H1 (cell line): ENCODE measurements at regions of chr7 and their contacts with region 1.

Region 1: GRCh38 chr7:5363729-5364128 is 59.9 kb downstream of the TNRC18 start:
- DNase-seq: no peak
- H3K4me3 ChIP-seq: no peak overlapping the region
- H3K27ac ChIP-seq: no peak overlapping the region
- H3K4me1 ChIP-seq: no peaks in the 10 kb centered on the region; a peak in 4 of 7 replicates
- H3K27me3 ChIP-seq: no peaks in the 10 kb centered on the region
- CTCF ChIP-seq: no peak
- EP300 ChIP-seq: no peak
- POLR2A ChIP-seq: no peak
- RAD21 ChIP-seq: no peak

Region 2: DNA sequence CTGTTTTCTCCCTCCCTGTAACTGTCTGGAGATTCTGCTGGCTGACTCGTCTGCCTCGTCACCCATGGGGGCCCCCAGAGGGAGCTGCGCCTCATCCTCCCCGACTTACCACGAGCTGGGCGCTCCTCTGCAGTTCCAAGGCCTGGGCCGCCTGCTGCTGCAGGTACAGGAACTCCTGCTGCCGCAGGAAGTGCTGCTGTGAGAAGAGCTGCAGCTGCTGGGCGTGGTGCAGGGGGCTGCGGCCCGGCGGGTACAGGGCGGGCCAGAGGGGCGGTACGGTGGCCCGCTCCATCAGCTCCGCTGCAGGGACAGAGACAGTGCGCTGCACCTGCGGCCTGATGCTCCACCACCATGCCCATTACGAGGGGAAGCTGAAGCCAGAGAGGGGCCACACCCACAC is 12.2 kb after region 1 on chr7:
- CTCF ChIA-PET with region 1: interaction called, 19 read pairs
- POLR2A ChIA-PET with region 1: no interaction called
- DNase-seq: no peak
- H3K4me3 ChIP-seq: no peak overlapping the region
- H3K27ac ChIP-seq: no peak overlapping the region
- H3K4me1 ChIP-seq: no peaks in the 10 kb centered on the region
- H3K27me3 ChIP-seq: no peaks in the 10 kb centered on the region
- CTCF ChIP-seq: no peak
- EP300 ChIP-seq: no peak
- POLR2A ChIP-seq: no peak
- RAD21 ChIP-seq: no peak

Region 3: GRCh38 chr7:5397736-5398135 is 34.0 kb after region 1 on chr7:
- CTCF ChIA-PET with region 1: interaction called, 31 read pairs
- POLR2A ChIA-PET with region 1: no interaction called
- DNase-seq: no peak
- H3K4me3 ChIP-seq: no peak overlapping the region
- H3K27ac ChIP-seq: no peak overlapping the region
- H3K4me1 ChIP-seq: no peaks in the 10 kb centered on the region
- H3K27me3 ChIP-seq: no peaks in the 10 kb centered on the region
- CTCF ChIP-seq: no peak
- EP300 ChIP-seq: no peak
- POLR2A ChIP-seq: no peak
- RAD21 ChIP-seq: no peak

Region 4: GRCh38 chr7:5450549-5451372 is 87.0 kb after region 1 on chr7:
- CTCF ChIA-PET with region 1: interaction called, 68 read pairs
- POLR2A ChIA-PET with region 1: interaction called, 6 read pairs
- DNase-seq: peak in 1 of 2 experiments; percentile 89
- H3K4me3 ChIP-seq: no peak overlapping the region
- H3K27ac ChIP-seq: no peak overlapping the region
- H3K4me1 ChIP-seq: peaks cover 0 to 8% (median 2%) of the 10 kb centered on the region in 4 experiments; a peak in 5 of 7 replicates
- H3K27me3 ChIP-seq: no peaks in the 10 kb centered on the region
- CTCF ChIP-seq: peak; percentile 69 to 75 (median 73)
- EP300 ChIP-seq: no peak
- POLR2A ChIP-seq: no peak
- RAD21 ChIP-seq: peak; percentile 86 to 94

Region 5: DNA sequence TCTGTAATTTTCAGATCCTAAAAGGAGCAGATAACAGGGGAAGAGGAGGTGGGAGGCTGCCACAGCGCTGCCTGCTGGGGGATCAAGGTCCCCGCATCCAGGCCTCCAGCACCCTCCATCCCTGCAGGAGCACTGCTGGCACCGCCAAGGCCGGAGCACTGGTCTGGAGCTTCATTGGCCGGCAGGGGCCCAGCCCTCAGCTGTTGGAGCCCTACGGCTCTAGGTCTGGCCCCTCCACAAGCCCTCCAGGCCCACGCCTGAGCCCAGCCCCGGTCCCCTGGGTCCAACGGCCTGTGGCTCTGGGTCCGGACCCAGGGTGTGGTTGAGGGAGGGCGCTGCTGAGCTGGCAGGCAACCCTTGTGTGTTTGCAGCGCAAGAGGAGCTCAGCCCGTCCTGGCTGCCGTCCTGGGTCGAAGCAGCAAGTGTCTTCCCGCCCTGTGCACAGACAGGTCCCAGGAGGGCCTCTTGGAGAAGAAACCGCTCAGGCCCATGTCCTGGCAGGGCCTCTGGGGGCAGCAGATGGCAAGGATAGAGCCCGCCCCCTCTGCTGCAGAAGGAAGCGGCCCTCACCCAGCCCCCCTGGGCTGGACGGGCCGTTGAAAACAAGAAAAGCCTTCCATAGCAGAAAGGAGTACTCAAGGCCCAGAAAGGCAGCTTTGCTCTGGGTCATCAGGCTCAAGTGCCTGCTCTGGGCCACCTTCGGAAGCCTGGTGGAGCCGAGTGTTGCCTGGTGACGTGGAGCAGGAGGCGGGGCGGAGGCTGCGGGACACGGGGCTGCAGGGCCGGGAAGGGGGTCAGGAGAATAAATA is 114.2 kb after region 1 on chr7:
- CTCF ChIA-PET with region 1: interaction called, 19 read pairs
- POLR2A ChIA-PET with region 1: no interaction called
- DNase-seq: peak in 1 of 2 experiments; percentile 76
- H3K4me3 ChIP-seq: 0 out of 8 replicates have a peak overlapping the region, but pooled peaks of 1 of the 4 experiments have one; percentile 25
- H3K27ac ChIP-seq: no peak overlapping the region
- H3K4me1 ChIP-seq: peaks cover 0 to 16% (median 8%) of the 10 kb centered on the region in 4 experiments; a peak in 5 of 7 replicates
- H3K27me3 ChIP-seq: no peaks in the 10 kb centered on the region
- CTCF ChIP-seq: peak in 2 of 3 experiments; percentile 56 to 59; a peak in 3 of 4 replicates
- EP300 ChIP-seq: no peak
- POLR2A ChIP-seq: no peak
- RAD21 ChIP-seq: peak; percentile 39 to 49